ENCODE measurements at regions of chr10 and their contacts with region 1.

Region 1: DNA sequence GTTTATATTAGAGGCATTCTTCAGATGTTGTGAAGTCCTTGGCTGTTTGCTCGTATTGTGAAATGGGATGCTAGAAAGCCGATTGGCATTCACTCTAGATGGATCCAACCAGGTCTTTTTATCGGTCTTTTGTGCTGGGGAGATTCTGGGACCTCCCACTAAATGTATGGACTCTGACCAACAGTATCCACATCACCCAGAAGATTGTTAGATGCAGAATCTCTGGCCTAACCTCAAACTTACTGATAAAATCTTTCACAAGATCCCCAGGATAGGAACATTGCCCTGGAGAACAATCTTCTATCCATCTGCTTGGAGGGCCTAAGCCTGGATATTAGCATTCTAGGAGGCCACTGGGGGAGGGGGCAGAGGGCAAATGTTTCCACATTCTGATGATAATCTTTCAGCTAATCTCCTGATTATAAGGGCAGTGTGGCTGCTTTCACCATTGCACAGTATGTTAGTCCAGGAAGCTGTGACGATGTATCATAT is 160.9 kb downstream of the PLXDC2 start:
- DNase-seq: no peak

Region 2: DNA sequence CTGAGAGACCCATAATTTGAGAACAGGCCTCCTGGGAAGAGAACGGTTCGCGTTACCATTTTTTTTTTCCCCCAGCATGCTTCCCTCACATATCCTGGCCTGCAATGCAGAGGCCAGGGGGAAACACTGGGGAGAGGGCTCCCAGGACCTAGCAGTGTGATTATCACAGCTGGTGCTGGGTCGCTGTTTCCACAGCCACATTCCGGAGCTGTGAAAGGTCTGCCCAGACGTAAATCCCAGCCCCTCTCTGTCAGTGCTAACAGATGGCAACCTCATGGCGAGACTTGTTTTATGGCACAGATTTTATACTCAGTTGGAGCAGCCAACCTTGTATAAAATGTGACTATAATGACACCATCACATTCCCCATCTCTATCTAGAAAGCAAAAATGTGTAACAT is 10.4 kb before region 1 on chr10:
- intact Hi-C with region 1: loop called (anchors 1 kb)
- DNase-seq: no peak

Measured in cardiac septum (tissue), 1 donor.